ENCODE measurements at regions of chr1 and their contacts with region 1.

Region 1: GRCh38 chr1:201895913-201896807 is 7.5 kb downstream of the SHISA4 start:
- DNase-seq: peak; percentile 85 to 91
- H3K4me3 ChIP-seq: no peak overlapping the region
- H3K4me3 Mint-ChIP-seq: peak overlapping the region; percentile 53
- H3K27ac Mint-ChIP-seq: no peak overlapping the region
- H3K4me1 ChIP-seq: no peaks in the 10 kb centered on the region
- H3K4me1 Mint-ChIP-seq: no peaks in the 10 kb centered on the region
- H3K27me3 ChIP-seq: no peaks in the 10 kb centered on the region; the same call in 1 of the 2 replicates
- H3K27me3 Mint-ChIP-seq: peaks cover 5% of the 10 kb centered on the region
- CTCF ChIP-seq: peak; percentile 95 to 96

Region 2: DNA sequence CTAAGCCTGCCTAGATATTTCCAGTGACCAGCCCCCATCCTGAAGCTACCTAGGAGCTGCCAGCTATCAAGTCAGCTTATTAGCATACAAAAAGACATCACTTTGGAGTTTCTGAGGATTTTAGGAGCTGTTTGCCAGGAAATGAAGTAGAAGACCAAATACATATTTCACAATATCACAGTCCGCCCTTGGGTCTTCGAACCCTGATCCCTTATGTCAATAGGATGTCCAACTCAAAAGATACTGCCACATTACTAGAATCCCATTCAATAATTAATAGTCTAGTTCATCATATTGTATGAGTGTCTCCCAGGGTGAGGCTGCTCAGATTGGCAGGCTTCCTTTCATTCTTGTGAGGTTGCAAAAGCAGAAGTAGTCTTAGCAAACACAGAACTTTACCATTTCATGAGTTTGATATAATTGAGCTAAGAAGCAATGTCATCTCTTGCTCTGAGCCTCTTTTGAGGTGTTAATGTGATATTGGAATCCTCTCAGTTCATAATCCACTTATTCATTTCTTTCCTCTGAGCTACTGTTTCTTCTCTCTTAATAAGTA is 53.6 kb before region 1 on chr1:
- CTCF ChIA-PET with region 1: no interaction called
- POLR2A ChIA-PET with region 1: no interaction called
- intact Hi-C with region 1: no loop called
- DNase-seq: no peak
- H3K4me3 ChIP-seq: no peak overlapping the region
- H3K4me3 Mint-ChIP-seq: no peak overlapping the region
- H3K27ac Mint-ChIP-seq: no peak overlapping the region
- H3K4me1 ChIP-seq: no peaks in the 10 kb centered on the region; the same call in none of the 2 replicates
- H3K4me1 Mint-ChIP-seq: peaks cover 6% of the 10 kb centered on the region
- H3K27me3 ChIP-seq: no peaks in the 10 kb centered on the region
- H3K27me3 Mint-ChIP-seq: no peaks in the 10 kb centered on the region
- CTCF ChIP-seq: no peak

Region 3: DNA sequence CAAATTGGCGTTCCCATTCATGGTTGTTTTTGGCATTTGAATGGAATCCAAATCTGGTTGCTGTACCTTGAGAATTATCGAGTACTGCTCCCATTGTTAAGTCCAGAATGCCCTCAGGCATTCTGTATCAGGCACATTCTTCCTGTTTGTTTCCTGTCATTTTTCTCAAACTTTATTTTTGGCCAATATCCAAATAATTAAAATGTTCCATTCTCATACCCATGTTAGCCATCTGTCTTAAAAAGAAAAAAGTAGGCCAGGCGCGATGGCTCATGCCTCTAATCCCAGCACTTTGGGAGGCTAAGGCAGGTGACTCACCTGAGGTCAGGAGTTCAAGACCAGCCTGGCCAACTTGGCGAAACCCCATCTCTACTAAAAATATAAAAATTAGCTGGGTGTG is 36.7 kb before region 1 on chr1:
- CTCF ChIA-PET with region 1: no interaction called
- POLR2A ChIA-PET with region 1: no interaction called
- intact Hi-C with region 1: no loop called
- DNase-seq: no peak
- H3K4me3 ChIP-seq: no peak overlapping the region
- H3K4me3 Mint-ChIP-seq: no peak overlapping the region
- H3K27ac Mint-ChIP-seq: no peak overlapping the region
- H3K4me1 ChIP-seq: no peaks in the 10 kb centered on the region
- H3K4me1 Mint-ChIP-seq: no peaks in the 10 kb centered on the region
- H3K27me3 ChIP-seq: no peaks in the 10 kb centered on the region
- H3K27me3 Mint-ChIP-seq: no peaks in the 10 kb centered on the region
- CTCF ChIP-seq: no peak

Region 4: DNA sequence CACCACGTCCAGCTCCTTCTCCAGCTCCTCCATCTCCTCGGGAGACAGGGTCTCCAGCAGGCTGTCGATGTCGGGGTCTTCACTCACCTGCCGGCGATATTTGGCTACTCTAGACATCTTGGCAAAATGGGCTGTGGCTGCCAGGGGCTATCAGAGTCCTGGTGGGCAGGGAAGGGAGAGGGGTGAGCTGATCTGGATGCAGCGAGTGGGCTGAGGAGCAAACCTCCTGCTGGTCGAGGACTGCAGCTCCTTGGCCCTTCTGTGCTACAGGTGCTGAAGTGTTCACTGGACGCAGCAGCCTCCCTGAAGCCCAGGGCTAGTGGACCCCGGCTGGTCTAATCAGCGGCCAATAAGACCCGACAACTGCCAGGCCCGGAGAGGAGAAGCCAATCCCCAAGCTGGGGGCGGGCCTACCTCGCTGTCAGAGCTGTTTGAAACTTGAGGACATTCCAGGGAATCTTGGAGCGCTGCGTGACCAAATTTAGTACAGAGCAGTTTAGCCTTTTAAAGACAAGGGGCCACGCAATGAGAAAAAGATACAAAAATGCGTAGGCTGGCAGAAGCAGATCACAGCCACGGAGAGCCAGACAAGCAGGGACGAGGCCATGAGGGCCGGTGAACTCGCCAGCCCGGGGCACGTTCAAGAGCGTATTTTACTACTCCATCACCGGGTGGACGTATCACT is 50.2 kb after region 1 on chr1 and contains the start of gene LMOD1:
- CTCF ChIA-PET with region 1: interaction called, 10 read pairs
- POLR2A ChIA-PET with region 1: no interaction called
- intact Hi-C with region 1: no loop called
- DNase-seq: peak; percentile 86 to 88
- H3K4me3 ChIP-seq: peak within 1 kb of the TSS; percentile 28
- H3K4me3 Mint-ChIP-seq: peak within 1 kb of the TSS; percentile 81
- H3K27ac Mint-ChIP-seq: peak within 1 kb of the TSS; percentile 18
- H3K4me1 ChIP-seq: peaks cover 10% of the 10 kb centered on the region
- H3K4me1 Mint-ChIP-seq: peaks cover 20% of the 10 kb centered on the region
- H3K27me3 ChIP-seq: no peaks in the 10 kb centered on the region
- H3K27me3 Mint-ChIP-seq: peaks cover 9% of the 10 kb centered on the region
- CTCF ChIP-seq: no peak
- total RNA-seq, gene LMOD1: 0.11 TPM in 1 of 2 replicates, not detected in the other

Region 5: GRCh38 chr1:201970334-201971159 is 74.4 kb after region 1 on chr1:
- CTCF ChIA-PET with region 1: interaction called, 41 read pairs
- POLR2A ChIA-PET with region 1: no interaction called
- intact Hi-C with region 1: loop called (anchors 1 kb)
- DNase-seq: no peak
- H3K4me3 ChIP-seq: no peak overlapping the region
- H3K4me3 Mint-ChIP-seq: no peak overlapping the region
- H3K27ac Mint-ChIP-seq: no peak overlapping the region
- H3K4me1 ChIP-seq: no peaks in the 10 kb centered on the region
- H3K4me1 Mint-ChIP-seq: no peaks in the 10 kb centered on the region
- H3K27me3 ChIP-seq: no peaks in the 10 kb centered on the region
- H3K27me3 Mint-ChIP-seq: peaks cover 3% of the 10 kb centered on the region
- CTCF ChIP-seq: no peak

Region 6: GRCh38 chr1:202112839-202113672 is 216.9 kb after region 1 on chr1:
- CTCF ChIA-PET with region 1: interaction called, 9 read pairs
- POLR2A ChIA-PET with region 1: no interaction called
- intact Hi-C with region 1: loop called (anchors 2 kb)
- DNase-seq: peak in 1 of 2 experiments; percentile 28
- H3K4me3 ChIP-seq: no peak overlapping the region
- H3K4me3 Mint-ChIP-seq: peak overlapping the region; percentile 16
- H3K27ac Mint-ChIP-seq: peak overlapping the region; percentile 81
- H3K4me1 ChIP-seq: peaks cover 49% of the 10 kb centered on the region
- H3K4me1 Mint-ChIP-seq: peaks cover 26% of the 10 kb centered on the region
- H3K27me3 ChIP-seq: no peaks in the 10 kb centered on the region
- H3K27me3 Mint-ChIP-seq: no peaks in the 10 kb centered on the region
- CTCF ChIP-seq: no peak

Region 7: GRCh38 chr1:202135221-202135721 is 239.1 kb after region 1 on chr1:
- CTCF ChIA-PET with region 1: interaction called, 10 read pairs
- POLR2A ChIA-PET with region 1: no interaction called
- intact Hi-C with region 1: no loop called
- DNase-seq: peak; percentile 66 to 69
- H3K4me3 ChIP-seq: no peak overlapping the region
- H3K4me3 Mint-ChIP-seq: no peak overlapping the region
- H3K27ac Mint-ChIP-seq: no peak overlapping the region
- H3K4me1 ChIP-seq: peaks cover 21% of the 10 kb centered on the region
- H3K4me1 Mint-ChIP-seq: no peaks in the 10 kb centered on the region
- H3K27me3 ChIP-seq: no peaks in the 10 kb centered on the region
- H3K27me3 Mint-ChIP-seq: no peaks in the 10 kb centered on the region
- CTCF ChIP-seq: peak; percentile 85 to 89